Activated CD8-positive, alpha-beta memory T cell treated with anti-CD3 and anti-CD28 coated beads, Interleukin-2, amount 10 ng/mL, durations not matched to agents 7 days and 5 days (primary cell): ENCODE measurements at regions of chr22 and their contacts with region 1.

Region 1: GRCh38 chr22:22753526-22754267 is 109.3 kb downstream of the GGTLC2 start:
- DNase-seq: peak; percentile 89
- ATAC-seq: peak; percentile 97
- H3K4me3 Mint-ChIP-seq: no peak overlapping the region
- H3K27ac Mint-ChIP-seq: no peak overlapping the region
- H3K4me1 Mint-ChIP-seq: peaks cover 20% of the 10 kb centered on the region
- H3K27me3 Mint-ChIP-seq: no peaks in the 10 kb centered on the region

Region 2: GRCh38 chr22:22710719-22711531 is 42.8 kb before region 1 on chr22:
- CTCF ChIA-PET with region 1: interaction called, 14 read pairs
- DNase-seq: peak; percentile 79
- ATAC-seq: peak; percentile 77
- H3K4me3 Mint-ChIP-seq: no peak overlapping the region
- H3K27ac Mint-ChIP-seq: no peak overlapping the region
- H3K4me1 Mint-ChIP-seq: peaks cover 4% of the 10 kb centered on the region
- H3K27me3 Mint-ChIP-seq: peaks cover 4% of the 10 kb centered on the region

Region 3: DNA sequence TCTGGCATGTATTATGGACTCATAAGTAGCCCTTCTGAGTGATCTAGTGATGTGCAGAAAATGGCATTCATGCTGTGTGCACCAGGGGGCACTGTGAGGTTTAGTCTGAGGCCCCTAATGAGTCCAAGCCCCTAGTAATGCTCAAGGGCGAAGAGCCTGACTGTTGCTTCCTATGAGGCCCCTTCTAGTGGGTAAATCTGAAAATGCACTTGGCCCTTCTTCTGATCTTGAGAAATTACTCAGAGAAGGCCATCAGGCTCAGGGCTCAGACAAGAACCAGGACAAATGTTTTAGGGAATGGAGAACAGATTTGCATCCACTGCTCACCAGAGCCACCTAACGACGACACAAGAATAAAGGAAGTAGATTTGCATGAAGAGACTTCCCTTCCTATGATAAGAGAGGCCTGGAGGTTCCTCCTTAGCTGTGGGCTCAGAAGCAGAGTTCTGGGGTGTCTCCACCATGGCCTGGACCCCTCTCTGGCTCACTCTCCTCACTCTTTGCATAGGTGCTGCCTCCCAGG is 33.4 kb before region 1 on chr22:
- CTCF ChIA-PET with region 1: interaction called, 20 read pairs
- DNase-seq: peak; percentile 72
- ATAC-seq: peak; percentile 88
- H3K4me3 Mint-ChIP-seq: no peak overlapping the region
- H3K27ac Mint-ChIP-seq: peak overlapping the region; percentile 37
- H3K4me1 Mint-ChIP-seq: peaks cover 34% of the 10 kb centered on the region
- H3K27me3 Mint-ChIP-seq: peaks cover 2% of the 10 kb centered on the region

Region 4: GRCh38 chr22:22770280-22770871 is 16.7 kb after region 1 on chr22:
- CTCF ChIA-PET with region 1: interaction called, 43 read pairs
- DNase-seq: peak; percentile 54
- ATAC-seq: peak; percentile 53
- H3K4me3 Mint-ChIP-seq: no peak overlapping the region
- H3K27ac Mint-ChIP-seq: no peak overlapping the region
- H3K4me1 Mint-ChIP-seq: peaks cover 3% of the 10 kb centered on the region
- H3K27me3 Mint-ChIP-seq: peaks cover 10% of the 10 kb centered on the region

Region 5: GRCh38 chr22:22877523-22878210 is 124.0 kb after region 1 on chr22:
- CTCF ChIA-PET with region 1: interaction called, 76 read pairs
- DNase-seq: peak; percentile 81
- ATAC-seq: peak; percentile 51
- H3K4me3 Mint-ChIP-seq: no peak overlapping the region
- H3K27ac Mint-ChIP-seq: no peak overlapping the region
- H3K4me1 Mint-ChIP-seq: no peaks in the 10 kb centered on the region
- H3K27me3 Mint-ChIP-seq: peaks cover 17% of the 10 kb centered on the region

Region 6: GRCh38 chr22:23565288-23565941 is 811.7 kb after region 1 on chr22:
- CTCF ChIA-PET with region 1: no interaction called
- DNase-seq: no peak
- ATAC-seq: peak; percentile 27
- H3K4me3 Mint-ChIP-seq: peak overlapping the region; percentile 37
- H3K27ac Mint-ChIP-seq: no peak overlapping the region
- H3K4me1 Mint-ChIP-seq: peaks cover 6% of the 10 kb centered on the region
- H3K27me3 Mint-ChIP-seq: peaks cover 46% of the 10 kb centered on the region